ENCODE measurements at regions of chr4 and their contacts with region 1.

Region 1: DNA sequence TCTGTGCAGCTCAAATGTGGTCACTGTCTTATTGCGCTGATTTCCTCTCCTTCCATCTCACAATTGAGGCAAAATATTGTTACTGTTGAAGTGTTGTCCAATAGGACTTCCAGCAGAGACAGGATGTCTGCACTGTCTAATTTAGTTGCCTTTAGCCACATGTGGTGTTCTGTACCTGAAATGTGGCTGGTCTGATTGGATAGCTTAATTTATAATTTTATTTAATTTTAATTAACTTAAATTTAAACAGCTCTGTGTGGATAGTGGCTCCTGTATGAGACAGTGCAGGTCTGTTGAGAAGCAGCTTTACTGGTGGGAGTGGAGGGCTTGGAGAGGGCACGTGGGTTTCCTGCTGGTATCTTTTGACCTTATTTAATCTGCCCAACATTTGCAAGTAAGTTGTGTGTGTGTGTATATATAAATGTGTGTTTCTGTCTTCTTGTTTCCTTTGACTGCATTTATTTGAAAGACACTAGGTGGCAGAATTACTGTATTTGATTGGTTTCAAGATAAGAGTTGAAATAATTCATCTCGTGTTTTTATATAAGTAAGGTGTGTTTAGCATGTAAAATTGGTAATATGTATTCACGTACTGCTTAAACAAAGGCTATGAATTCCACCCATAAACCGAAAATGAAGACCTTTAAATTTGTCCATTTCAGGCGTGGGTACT is 55.3 kb upstream of the MSANTD1 start:
- DNase-seq: no peak
- H3K4me3 Mint-ChIP-seq: no peak overlapping the region
- H3K27ac Mint-ChIP-seq: peak overlapping the region; percentile 26
- H3K4me1 Mint-ChIP-seq: peaks cover 68% of the 10 kb centered on the region
- H3K27me3 Mint-ChIP-seq: no peaks in the 10 kb centered on the region

Region 2: DNA sequence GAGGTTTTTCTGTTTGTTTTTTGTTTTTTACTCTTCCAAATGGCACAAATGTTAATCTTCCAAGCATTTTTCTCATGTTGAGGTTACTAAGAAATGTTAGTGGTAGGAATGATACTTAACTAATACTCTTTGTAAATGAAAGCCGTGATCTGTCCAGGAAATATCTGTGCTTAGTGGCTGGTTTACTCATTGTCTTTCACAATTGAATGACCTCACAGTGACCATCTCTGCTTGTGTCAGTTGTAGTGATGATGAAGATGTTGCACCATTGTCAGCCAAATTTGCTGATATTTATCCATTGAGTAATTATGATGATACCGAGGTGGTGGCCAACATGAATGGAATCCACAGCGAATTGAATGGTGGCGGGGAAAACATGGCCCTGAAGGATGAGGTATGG is 531.1 kb before region 1 on chr4:
- CTCF ChIA-PET with region 1: no interaction called
- DNase-seq: no peak
- H3K4me3 Mint-ChIP-seq: no peak overlapping the region
- H3K27ac Mint-ChIP-seq: no peak overlapping the region
- H3K4me1 Mint-ChIP-seq: peaks cover 13% of the 10 kb centered on the region
- H3K27me3 Mint-ChIP-seq: no peaks in the 10 kb centered on the region

Region 3: GRCh38 chr4:2995546-2996265 is 198.0 kb before region 1 on chr4:
- CTCF ChIA-PET with region 1: no interaction called
- DNase-seq: no peak
- H3K4me3 Mint-ChIP-seq: no peak overlapping the region
- H3K27ac Mint-ChIP-seq: no peak overlapping the region
- H3K4me1 Mint-ChIP-seq: no peaks in the 10 kb centered on the region
- H3K27me3 Mint-ChIP-seq: peaks cover 21% of the 10 kb centered on the region

Region 4: GRCh38 chr4:3243136-3243780 is 49.6 kb after region 1 on chr4:
- CTCF ChIA-PET with region 1: interaction called, 14 read pairs
- DNase-seq: peak; percentile 68
- H3K4me3 Mint-ChIP-seq: no peak overlapping the region
- H3K27ac Mint-ChIP-seq: peak overlapping the region; percentile 75
- H3K4me1 Mint-ChIP-seq: peaks cover 21% of the 10 kb centered on the region
- H3K27me3 Mint-ChIP-seq: no peaks in the 10 kb centered on the region